Esophagus muscularis mucosa (tissue), 4 donors: ENCODE measurements at regions of chr18 and their contacts with region 1.

Region 1: GRCh38 chr18:55582325-55582724 is 5.7 kb downstream of the TCF4 start:
- DNase-seq: no peak
- H3K4me3 ChIP-seq: no peak overlapping the region
- H3K27ac ChIP-seq: no peak overlapping the region
- H3K4me1 ChIP-seq: peaks cover 19 to 62% (median 44%) of the 10 kb centered on the region in 4 donors
- H3K27me3 ChIP-seq: no peaks in the 10 kb centered on the region
- CTCF ChIP-seq: no peak
- EP300 ChIP-seq: no peak
- POLR2A ChIP-seq: no peak

Region 2: GRCh38 chr18:55546851-55547704 is 35.2 kb before region 1 on chr18:
- intact Hi-C with region 1: loop called (anchors 5 kb)
- DNase-seq: no peak
- H3K4me3 ChIP-seq: peak overlapping the region; percentile 10 to 42 (median 30)
- H3K27ac ChIP-seq: peak overlapping the region; percentile 7 to 33 (median 16)
- H3K4me1 ChIP-seq: peaks cover 0 to 46% (median 34%) of the 10 kb centered on the region in 4 donors
- H3K27me3 ChIP-seq: no peaks in the 10 kb centered on the region
- CTCF ChIP-seq: no peak
- EP300 ChIP-seq: no peak
- POLR2A ChIP-seq: no peak